PC-9 (cell line): ENCODE measurements at regions of chr9 and their contacts with region 1.

Region 1: DNA sequence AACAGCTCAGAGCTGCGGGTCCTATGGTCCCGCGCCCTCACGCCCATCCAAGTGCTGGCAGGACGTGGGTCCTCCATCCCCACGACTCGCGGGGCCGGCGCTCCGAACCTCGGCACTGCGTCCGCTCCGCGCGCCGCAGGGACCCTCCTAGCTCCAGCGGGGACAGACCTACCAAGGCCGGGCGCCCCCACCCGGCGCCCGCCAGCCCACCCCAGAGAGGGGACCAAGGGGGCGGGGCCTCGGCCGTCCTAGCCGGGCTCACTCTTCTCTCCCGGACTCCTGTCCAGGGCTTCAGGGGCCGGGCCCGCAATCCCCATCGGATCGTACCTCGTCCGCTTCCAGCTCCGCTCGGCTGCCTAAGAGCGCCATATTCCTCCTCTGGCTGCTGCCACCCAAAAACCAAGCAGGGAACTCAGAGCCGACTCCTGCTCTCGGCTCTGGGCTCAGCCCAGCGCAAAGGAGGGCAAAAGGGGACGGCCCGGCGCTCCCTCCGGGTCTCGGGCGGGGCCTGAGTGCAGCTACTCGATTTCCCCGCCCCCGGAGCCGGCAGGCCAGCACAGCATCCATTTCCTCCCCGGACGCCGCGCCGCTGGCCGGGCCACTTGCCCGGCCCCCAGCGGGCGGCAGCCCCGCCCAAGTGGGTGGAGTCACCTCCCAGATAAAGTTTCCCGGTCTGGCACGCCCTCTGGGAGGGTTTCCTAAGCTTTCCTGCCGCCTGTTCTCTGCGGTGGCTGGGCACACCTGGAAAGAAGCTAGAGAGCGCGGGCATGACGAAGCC is at the start of gene TTC39B:
- DNase-seq: peak; percentile 73 to 92
- H3K4me3 ChIP-seq: peak within 1 kb of the TSS; percentile 87
- H3K27ac ChIP-seq: peak within 1 kb of the TSS; percentile 65
- H3K4me1 ChIP-seq: peaks cover 11% of the 10 kb centered on the region
- H3K27me3 ChIP-seq: no peaks in the 10 kb centered on the region
- CTCF ChIP-seq: no peak
- total RNA-seq, gene TTC39B: 8.7 and 8.8 TPM in 2 replicates

Region 2: GRCh38 chr9:14205463-14205862 is 1101.5 kb before region 1 on chr9:
- CTCF ChIA-PET with region 1: no interaction called
- POLR2A ChIA-PET with region 1: interaction called, 13 read pairs
- intact Hi-C with region 1: no loop called
- DNase-seq: peak in 1 of 2 experiments; percentile 93
- H3K4me3 ChIP-seq: no peak overlapping the region
- H3K27ac ChIP-seq: peak overlapping the region; percentile 85
- H3K4me1 ChIP-seq: peaks cover 26% of the 10 kb centered on the region
- H3K27me3 ChIP-seq: no peaks in the 10 kb centered on the region
- CTCF ChIP-seq: no peak

Region 3: GRCh38 chr9:15161753-15162152 is 145.2 kb before region 1 on chr9:
- CTCF ChIA-PET with region 1: no interaction called
- POLR2A ChIA-PET with region 1: interaction called, 11 read pairs
- intact Hi-C with region 1: no loop called
- DNase-seq: no peak
- H3K4me3 ChIP-seq: no peak overlapping the region
- H3K27ac ChIP-seq: no peak overlapping the region
- H3K4me1 ChIP-seq: 0 out of 2 replicates have a peak, but pooled peaks cover 6% of the 10 kb centered on the region
- H3K27me3 ChIP-seq: no peaks in the 10 kb centered on the region
- CTCF ChIP-seq: no peak